Activated CD8-positive, alpha-beta T cell treated with anti-CD3 and anti-CD28 coated beads for 36 hours (primary cell): ENCODE measurements at regions of chr2 and their contacts with region 1.

Region 1: DNA sequence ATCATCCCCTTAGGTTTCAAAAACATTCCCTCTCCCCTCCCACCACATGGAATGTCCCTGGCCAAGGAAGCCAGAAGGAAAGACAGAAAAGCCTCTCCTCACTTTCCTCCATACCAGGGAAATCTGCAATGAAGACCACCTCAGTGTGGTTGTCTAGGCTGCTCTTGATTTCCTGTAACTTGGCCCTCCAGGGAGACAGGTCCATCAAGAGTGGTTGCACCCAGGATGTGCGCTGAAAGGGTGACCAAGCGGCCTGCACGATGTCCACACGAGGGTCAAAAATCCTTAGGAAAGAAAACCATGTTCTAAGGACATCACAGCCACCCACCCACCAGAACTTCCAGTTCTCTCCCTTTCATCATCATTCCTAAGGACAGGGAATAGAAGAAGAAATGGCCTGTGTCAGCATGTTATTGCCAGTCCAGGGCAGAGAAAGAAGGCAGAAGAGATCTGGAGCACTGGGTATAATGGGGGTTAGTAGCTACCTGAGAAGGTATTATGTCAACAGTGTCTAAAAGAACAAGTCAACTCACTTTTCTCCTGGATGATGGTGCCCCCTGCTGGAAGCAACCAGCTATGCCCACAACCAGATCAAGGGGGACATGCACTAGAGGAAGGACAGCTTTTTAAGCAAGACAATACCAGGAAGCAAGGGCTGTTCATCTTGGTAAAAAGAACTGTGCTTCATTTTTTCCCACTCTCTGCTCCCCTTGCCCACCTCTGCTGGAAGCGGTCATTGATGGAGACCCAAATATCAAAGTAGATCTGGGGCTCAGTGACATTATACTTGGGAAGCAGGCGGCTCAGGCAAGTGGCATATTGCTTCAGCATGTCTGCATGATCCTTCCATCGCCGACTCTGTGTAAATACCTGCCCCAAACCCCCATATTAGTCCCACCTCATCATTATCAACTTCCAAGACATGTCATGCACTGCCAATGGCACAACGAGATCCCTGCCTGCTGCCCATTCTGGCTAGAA is 9.3 kb downstream of the GGCX start:
- DNase-seq: peak; percentile 92
- ATAC-seq: peak; percentile 96
- H3K4me3 Mint-ChIP-seq: no peak overlapping the region
- H3K27ac Mint-ChIP-seq: no peak overlapping the region
- H3K4me1 Mint-ChIP-seq: no peaks in the 10 kb centered on the region
- H3K27me3 Mint-ChIP-seq: no peaks in the 10 kb centered on the region
- CTCF ChIP-seq: peak; percentile 91

Region 2: DNA sequence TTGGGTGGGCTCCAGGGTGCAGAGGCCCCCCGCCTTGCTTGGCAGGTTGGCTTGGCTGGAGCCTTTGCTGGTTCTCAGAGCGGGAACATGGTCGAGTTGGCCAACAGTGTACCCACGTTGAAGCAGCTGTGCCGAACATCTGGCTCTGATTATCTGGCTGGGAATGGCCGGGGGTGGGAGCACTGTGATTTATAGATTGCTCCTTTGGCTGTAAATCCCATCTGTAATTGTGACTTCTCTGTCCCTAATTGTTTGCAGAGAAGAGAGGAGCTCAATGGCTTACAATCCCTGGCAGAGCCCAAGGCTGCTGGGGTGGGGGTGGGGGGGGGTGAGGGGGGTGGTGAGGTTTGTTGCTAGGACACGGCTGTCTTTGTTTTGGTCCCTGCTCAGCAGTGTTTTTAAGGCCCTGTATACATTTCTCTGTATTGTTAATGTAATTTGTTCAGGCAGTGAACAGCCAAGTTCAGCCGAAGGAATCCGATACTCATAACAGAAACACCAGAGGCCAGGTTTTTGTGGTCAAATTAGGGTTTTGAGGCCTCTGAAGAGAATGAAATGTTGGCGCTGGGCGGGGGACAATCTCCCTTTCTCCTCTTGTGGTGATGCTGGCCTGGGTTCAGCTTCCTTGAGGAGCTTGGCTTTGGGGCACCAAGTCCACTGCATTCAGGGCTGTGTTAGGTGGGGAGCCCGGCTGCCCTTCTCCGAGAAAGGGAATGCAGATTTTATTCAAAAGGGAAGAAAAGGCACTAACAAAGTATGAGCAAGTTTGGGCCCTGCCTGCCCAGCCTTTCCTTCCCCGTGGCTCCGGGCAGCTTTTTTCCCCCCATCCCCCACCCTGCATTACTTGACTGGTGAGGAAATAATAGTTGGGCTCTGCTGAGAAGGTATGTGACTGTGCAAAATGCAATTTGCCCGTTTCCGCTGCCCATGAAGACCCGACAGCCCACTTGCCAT is 336.3 kb before region 1 on chr2:
- CTCF ChIA-PET with region 1: no interaction called
- POLR2A ChIA-PET with region 1: no interaction called
- intact Hi-C with region 1: no loop called
- DNase-seq: no peak
- ATAC-seq: no peak
- H3K4me3 Mint-ChIP-seq: no peak overlapping the region
- H3K27ac Mint-ChIP-seq: no peak overlapping the region
- H3K4me1 Mint-ChIP-seq: no peaks in the 10 kb centered on the region
- H3K27me3 Mint-ChIP-seq: peaks cover 26% of the 10 kb centered on the region
- CTCF ChIP-seq: no peak

Region 3: DNA sequence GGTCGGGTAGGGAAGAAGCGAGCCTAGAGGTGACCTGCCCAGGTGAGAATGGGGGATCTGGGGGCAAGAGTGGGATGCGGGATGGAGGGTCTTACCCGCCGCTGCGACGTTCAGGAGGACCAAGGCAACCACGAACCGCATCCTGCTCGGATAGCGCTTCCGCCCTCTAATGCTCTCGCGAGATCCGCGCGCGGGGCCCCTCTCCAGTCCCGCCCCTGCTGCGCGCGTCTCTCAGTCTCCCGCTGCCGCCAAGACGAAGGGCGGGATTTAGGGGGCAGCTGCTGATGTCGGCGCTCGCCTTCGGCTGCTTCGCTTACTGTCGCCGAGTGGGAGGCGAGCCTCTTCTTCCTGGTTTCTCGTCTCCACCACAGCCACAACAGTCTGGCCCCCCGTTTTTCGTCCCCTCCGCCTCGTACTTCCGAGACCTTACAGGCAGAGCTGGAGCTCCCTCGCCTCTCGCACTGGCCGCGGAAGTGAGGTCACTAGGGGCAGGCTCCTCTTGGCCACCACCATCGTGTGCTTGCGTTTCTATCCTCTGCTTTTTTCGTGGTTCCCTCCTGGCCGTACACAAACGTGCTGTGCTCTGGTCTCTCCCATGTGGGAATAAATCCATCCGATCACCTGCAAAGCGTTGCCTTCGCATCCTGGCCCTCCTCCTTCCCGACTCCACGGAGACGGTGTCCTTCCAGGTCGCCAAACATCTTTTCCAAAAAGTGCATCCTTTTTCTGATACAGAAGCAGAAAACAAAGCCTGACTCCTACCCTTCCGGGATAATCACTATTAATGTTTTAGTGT is 224.0 kb before region 1 on chr2 and contains the start of gene TGOLN2:
- CTCF ChIA-PET with region 1: interaction called, 11 read pairs
- POLR2A ChIA-PET with region 1: interaction called, 11 read pairs
- intact Hi-C with region 1: loop called (anchors 10 kb)
- DNase-seq: peak; percentile 96
- ATAC-seq: peak; percentile 89
- H3K4me3 Mint-ChIP-seq: peak within 1 kb of the TSS; percentile 92
- H3K27ac Mint-ChIP-seq: peak within 1 kb of the TSS; percentile 100
- H3K4me1 Mint-ChIP-seq: peaks cover 31% of the 10 kb centered on the region
- H3K27me3 Mint-ChIP-seq: no peaks in the 10 kb centered on the region
- CTCF ChIP-seq: no peak
- total RNA-seq, gene TGOLN2: 62.8 to 64.0 TPM

Region 4: GRCh38 chr2:85390941-85391669 is 160.9 kb before region 1 on chr2:
- CTCF ChIA-PET with region 1: interaction called, 108 read pairs
- POLR2A ChIA-PET with region 1: interaction called, 9 read pairs
- intact Hi-C with region 1: loop called (anchors 1 kb)
- DNase-seq: peak; percentile 85
- ATAC-seq: peak; percentile 88
- H3K4me3 Mint-ChIP-seq: no peak overlapping the region
- H3K27ac Mint-ChIP-seq: no peak overlapping the region
- H3K4me1 Mint-ChIP-seq: peaks cover 3% of the 10 kb centered on the region
- H3K27me3 Mint-ChIP-seq: no peaks in the 10 kb centered on the region
- CTCF ChIP-seq: peak; percentile 67

Region 5: GRCh38 chr2:85420536-85421259 is 131.3 kb before region 1 on chr2:
- CTCF ChIA-PET with region 1: interaction called, 221 read pairs
- POLR2A ChIA-PET with region 1: interaction called, 382 read pairs
- intact Hi-C with region 1: loop called (anchors 1 kb)
- DNase-seq: peak; percentile 95
- ATAC-seq: peak; percentile 74
- H3K4me3 Mint-ChIP-seq: peak overlapping the region; percentile 31
- H3K27ac Mint-ChIP-seq: peak overlapping the region; percentile 73
- H3K4me1 Mint-ChIP-seq: peaks cover 18% of the 10 kb centered on the region
- H3K27me3 Mint-ChIP-seq: no peaks in the 10 kb centered on the region
- CTCF ChIP-seq: peak; percentile 97

Region 6: GRCh38 chr2:85437488-85438284 is 114.3 kb before region 1 on chr2:
- CTCF ChIA-PET with region 1: interaction called, 17 read pairs
- POLR2A ChIA-PET with region 1: interaction called, 382 read pairs
- intact Hi-C with region 1: no loop called
- DNase-seq: peak; percentile 83
- ATAC-seq: peak; percentile 79
- H3K4me3 Mint-ChIP-seq: peak overlapping the region; percentile 78
- H3K27ac Mint-ChIP-seq: peak overlapping the region; percentile 93
- H3K4me1 Mint-ChIP-seq: peaks cover 30% of the 10 kb centered on the region
- H3K27me3 Mint-ChIP-seq: no peaks in the 10 kb centered on the region
- CTCF ChIP-seq: no peak

Region 7: DNA sequence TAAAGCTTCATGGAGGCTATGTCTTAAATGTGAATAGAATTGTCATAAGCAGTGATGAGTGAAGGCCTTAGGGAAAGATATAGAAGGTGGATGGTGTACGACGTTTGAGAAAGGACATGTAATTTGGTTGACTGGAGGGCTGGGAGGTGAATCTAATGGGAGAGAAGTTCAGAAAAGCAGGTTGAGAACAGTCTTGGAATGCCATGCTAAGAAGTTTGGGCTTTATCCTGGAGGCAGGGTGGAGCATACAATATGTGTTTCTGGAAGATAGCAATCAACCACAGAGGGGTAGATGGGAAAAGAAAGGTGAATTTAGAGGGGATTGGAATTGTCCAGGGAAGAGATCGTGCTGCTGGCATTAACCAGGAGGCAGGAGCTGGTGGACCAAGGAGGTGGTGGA is 18.3 kb after region 1 on chr2:
- CTCF ChIA-PET with region 1: interaction called, 11 read pairs
- POLR2A ChIA-PET with region 1: interaction called, 467 read pairs
- intact Hi-C with region 1: no loop called
- DNase-seq: no peak
- ATAC-seq: no peak
- H3K4me3 Mint-ChIP-seq: no peak overlapping the region
- H3K27ac Mint-ChIP-seq: no peak overlapping the region
- H3K4me1 Mint-ChIP-seq: no peaks in the 10 kb centered on the region
- H3K27me3 Mint-ChIP-seq: no peaks in the 10 kb centered on the region
- CTCF ChIP-seq: no peak